ENCODE measurements at regions of chr5 and their contacts with region 1.

Region 1: GRCh38 chr5:59506285-59506877 is 387.1 kb downstream of the PDE4D start:
- DNase-seq: no peak
- H3K4me3 ChIP-seq: no peak overlapping the region
- H3K27ac ChIP-seq: no peak overlapping the region
- H3K27me3 ChIP-seq: no peaks in the 10 kb centered on the region
- CTCF ChIP-seq: peak; percentile 46

Region 2: DNA sequence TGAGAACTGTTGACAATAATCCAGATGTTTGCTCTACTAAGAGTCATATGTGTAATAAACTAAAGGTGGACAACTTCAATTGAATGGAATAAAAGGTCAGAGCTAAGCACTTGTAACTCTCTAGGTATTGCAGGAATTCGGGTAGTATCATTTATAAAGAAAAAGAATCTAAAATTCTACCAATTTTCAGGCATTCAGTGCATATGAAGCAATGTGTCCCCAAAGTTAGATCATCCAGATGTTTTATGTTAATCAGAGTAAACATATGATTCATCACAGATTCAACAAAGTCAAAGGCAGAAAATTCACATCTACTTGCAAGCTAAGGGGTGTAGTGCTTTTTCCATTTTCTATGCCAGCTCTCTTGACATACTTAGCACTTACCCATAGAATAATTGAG is 89.9 kb before region 1 on chr5:
- CTCF ChIA-PET with region 1: no interaction called
- POLR2A ChIA-PET with region 1: no interaction called
- DNase-seq: no peak
- H3K4me3 ChIP-seq: no peak overlapping the region
- H3K27ac ChIP-seq: no peak overlapping the region
- H3K27me3 ChIP-seq: no peaks in the 10 kb centered on the region
- CTCF ChIP-seq: no peak

Region 3: DNA sequence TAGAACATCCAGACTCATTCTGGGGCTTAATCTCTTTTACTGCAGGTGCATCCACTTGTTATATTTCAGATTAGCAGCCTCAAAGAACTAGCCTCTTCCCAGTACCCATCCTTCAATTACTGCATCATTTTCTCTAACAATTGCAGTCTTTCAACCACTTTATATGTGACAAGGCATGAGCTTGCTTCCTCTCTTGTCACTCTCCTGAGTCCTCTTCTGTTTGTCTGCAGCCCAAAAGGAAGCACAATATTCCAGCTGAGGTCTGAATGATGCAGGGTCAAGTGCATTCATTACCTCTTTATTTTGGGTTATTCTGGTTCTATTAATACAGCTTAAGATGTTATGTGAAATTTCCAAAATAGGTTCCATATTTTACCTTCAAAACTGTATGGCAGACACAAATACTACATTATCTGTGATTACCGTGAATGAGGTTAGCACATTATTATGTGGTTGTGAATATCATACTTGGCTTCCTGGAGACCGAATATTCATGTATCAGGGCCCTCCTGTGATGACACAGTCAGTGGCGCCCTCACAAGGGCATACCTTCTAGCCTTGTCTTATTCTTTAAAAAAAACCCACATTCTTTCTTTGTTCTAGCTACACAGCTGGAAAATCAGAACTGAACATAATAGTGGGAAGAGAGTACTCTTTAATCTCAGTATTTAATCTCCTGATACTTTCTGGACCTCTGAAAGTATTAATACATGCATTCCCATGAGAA is 63.4 kb after region 1 on chr5:
- CTCF ChIA-PET with region 1: no interaction called
- POLR2A ChIA-PET with region 1: no interaction called
- DNase-seq: no peak
- H3K4me3 ChIP-seq: no peak overlapping the region
- H3K27ac ChIP-seq: no peak overlapping the region
- H3K27me3 ChIP-seq: no peaks in the 10 kb centered on the region
- CTCF ChIP-seq: no peak

Region 4: DNA sequence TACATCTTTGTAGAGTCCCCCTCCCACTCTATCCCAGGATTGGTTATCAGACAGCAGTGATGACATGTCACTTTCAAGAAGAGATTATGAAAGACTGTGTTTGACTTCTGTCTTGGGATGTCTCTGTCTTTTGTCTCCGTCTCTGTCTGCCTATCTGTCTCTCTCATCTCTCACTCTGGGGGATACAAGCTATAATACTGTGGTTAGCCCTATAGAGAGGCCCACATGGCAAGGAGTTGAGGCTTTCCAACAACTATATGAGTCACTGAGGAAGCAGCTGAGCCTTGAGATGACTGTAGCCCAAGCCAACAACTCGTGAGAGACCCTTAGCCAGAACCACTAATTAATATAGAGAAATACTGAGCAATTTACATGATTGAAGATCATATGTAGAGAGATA is 102.4 kb after region 1 on chr5:
- CTCF ChIA-PET with region 1: no interaction called
- POLR2A ChIA-PET with region 1: no interaction called
- DNase-seq: no peak
- H3K4me3 ChIP-seq: no peak overlapping the region
- H3K27ac ChIP-seq: no peak overlapping the region
- H3K27me3 ChIP-seq: no peaks in the 10 kb centered on the region
- CTCF ChIP-seq: no peak

Region 5: GRCh38 chr5:59660737-59661136 is 154.4 kb after region 1 on chr5:
- CTCF ChIA-PET with region 1: interaction called, 12 read pairs
- POLR2A ChIA-PET with region 1: no interaction called
- DNase-seq: no peak
- H3K4me3 ChIP-seq: no peak overlapping the region
- H3K27ac ChIP-seq: no peak overlapping the region
- H3K27me3 ChIP-seq: no peaks in the 10 kb centered on the region
- CTCF ChIP-seq: peak; percentile 45

Region 6: GRCh38 chr5:59799668-59800346 is 293.4 kb after region 1 on chr5:
- CTCF ChIA-PET with region 1: interaction called, 28 read pairs
- POLR2A ChIA-PET with region 1: no interaction called
- DNase-seq: no peak
- H3K4me3 ChIP-seq: no peak overlapping the region
- H3K27ac ChIP-seq: no peak overlapping the region
- H3K27me3 ChIP-seq: no peaks in the 10 kb centered on the region
- CTCF ChIP-seq: peak; percentile 72